Activated B cell treated with CpG ODN at 0.5 μM for 24 hours (primary cell): ENCODE measurements at regions of chr20 and their contacts with region 1.

Region 1: GRCh38 chr20:45293041-45294002 is 13.3 kb upstream of the RBPJL start:
- DNase-seq: peak; percentile 78
- ATAC-seq: peak; percentile 89
- H3K4me3 Mint-ChIP-seq: peak overlapping the region; percentile 80
- H3K27ac Mint-ChIP-seq: no peak overlapping the region
- H3K4me1 Mint-ChIP-seq: peaks cover 21% of the 10 kb centered on the region
- H3K27me3 Mint-ChIP-seq: peaks cover 27% of the 10 kb centered on the region
- CTCF ChIP-seq: peak; percentile 87

Region 2: DNA sequence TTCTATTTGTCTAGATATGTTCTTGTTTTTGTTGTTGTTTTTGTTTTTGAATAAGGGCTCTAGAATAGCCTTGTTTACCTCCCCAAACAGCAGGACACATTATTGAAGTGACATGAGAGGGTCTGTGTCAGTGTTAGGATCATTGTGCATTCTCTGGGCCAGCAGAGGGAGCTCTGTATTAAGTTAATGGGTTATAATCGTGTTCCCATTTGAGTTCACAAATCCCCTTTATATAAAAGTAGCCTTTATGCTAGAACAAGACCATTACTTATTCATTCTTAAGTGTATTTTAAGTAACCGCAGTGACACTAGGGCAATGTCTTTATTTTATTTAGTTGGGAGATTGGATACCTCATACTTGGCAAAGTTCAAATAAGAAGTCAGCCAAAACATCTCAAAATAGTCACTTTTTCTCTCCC is 282.2 kb before region 1 on chr20:
- CTCF ChIA-PET with region 1: interaction called, 7 read pairs
- POLR2A ChIA-PET with region 1: no interaction called
- intact Hi-C with region 1: loop called (anchors 1 kb)
- DNase-seq: no peak
- ATAC-seq: peak; percentile 57
- H3K4me3 Mint-ChIP-seq: no peak overlapping the region
- H3K27ac Mint-ChIP-seq: peak overlapping the region; percentile 33
- H3K4me1 Mint-ChIP-seq: peaks cover 19% of the 10 kb centered on the region
- H3K27me3 Mint-ChIP-seq: no peaks in the 10 kb centered on the region
- CTCF ChIP-seq: no peak

Region 3: DNA sequence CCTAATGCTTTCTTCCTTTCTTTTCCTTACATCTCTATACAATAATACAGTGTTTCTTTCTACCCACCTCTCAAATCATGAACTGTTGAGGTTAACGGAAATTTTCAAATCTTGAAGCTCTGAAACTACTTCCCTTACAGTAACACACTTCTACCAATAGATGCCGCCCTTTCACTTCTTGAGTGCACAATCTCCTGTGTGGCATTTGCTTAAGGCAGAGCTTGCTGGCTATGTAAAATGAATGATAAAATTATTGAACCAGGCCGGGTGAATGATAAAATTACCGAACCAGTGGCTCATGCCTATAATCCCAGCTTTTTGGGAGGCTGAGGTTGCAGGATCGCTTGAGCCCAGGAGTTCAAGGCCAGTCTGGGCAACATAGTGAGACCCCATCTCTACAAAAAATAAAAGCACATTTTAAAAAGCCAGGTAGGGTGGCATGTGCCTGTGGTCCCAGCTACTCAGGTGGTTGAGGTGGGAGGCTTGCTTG is 249.2 kb before region 1 on chr20:
- CTCF ChIA-PET with region 1: interaction called, 34 read pairs
- POLR2A ChIA-PET with region 1: no interaction called
- intact Hi-C with region 1: loop called (anchors 1 kb)
- DNase-seq: no peak
- ATAC-seq: peak; percentile 93
- H3K4me3 Mint-ChIP-seq: no peak overlapping the region
- H3K27ac Mint-ChIP-seq: peak overlapping the region; percentile 1
- H3K4me1 Mint-ChIP-seq: peaks cover 68% of the 10 kb centered on the region
- H3K27me3 Mint-ChIP-seq: no peaks in the 10 kb centered on the region
- CTCF ChIP-seq: peak; percentile 38

Region 4: GRCh38 chr20:45138561-45139300 is 154.6 kb before region 1 on chr20:
- CTCF ChIA-PET with region 1: interaction called, 4 read pairs
- POLR2A ChIA-PET with region 1: no interaction called
- intact Hi-C with region 1: loop called (anchors 5 kb)
- DNase-seq: peak; percentile 34
- ATAC-seq: no peak
- H3K4me3 Mint-ChIP-seq: no peak overlapping the region
- H3K27ac Mint-ChIP-seq: no peak overlapping the region
- H3K4me1 Mint-ChIP-seq: no peaks in the 10 kb centered on the region
- H3K27me3 Mint-ChIP-seq: peaks cover 14% of the 10 kb centered on the region
- CTCF ChIP-seq: no peak

Region 5: DNA sequence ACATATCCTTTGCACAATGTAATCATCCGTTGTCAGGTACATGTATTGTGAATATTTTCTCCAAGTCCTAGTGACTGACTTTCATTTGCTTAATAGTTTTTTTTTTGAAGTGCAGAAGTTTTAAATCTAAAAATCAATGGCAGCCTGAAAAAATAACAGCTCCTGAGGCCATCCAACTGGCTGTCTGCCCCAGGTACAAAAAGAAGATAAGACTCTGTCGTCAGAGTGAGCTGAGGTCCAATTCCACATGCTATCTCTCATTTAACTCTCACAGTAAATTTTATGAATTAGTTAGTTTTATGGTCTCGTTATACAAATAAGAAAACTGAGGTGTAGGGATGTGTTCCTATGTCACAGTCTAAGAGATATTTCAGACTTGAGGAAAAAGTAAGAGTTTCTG is 18.0 kb before region 1 on chr20:
- CTCF ChIA-PET with region 1: no interaction called
- POLR2A ChIA-PET with region 1: no interaction called
- intact Hi-C with region 1: no loop called
- DNase-seq: no peak
- ATAC-seq: no peak
- H3K4me3 Mint-ChIP-seq: no peak overlapping the region
- H3K27ac Mint-ChIP-seq: no peak overlapping the region
- H3K4me1 Mint-ChIP-seq: no peaks in the 10 kb centered on the region
- H3K27me3 Mint-ChIP-seq: peaks cover 42% of the 10 kb centered on the region
- CTCF ChIP-seq: no peak

Region 6: DNA sequence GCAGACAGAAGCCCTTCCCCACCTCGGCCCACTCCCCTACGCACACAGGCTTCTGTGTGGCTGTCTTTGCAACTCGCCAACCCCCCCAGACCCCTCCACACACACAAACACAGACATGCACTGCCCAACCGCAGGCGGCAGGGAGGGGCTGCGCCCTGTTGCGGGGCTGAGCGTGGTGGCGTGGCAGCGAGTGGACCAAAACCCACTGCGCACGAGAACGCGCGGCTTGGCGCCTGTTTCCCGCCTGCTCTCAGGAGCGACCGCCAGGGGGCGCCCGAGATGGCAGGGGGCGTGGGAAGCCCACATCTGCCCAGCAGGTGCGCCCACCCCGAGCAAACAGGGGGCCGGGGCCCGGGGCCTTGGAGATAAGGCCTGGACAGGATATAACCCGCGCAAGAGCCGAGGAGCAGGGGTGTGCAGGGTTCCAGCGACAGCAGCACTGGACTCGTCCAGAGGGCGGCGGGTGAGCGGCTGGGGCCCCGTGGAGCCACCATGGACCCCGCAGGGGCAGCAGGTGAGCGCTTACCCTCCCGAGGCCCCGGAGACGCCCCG is 13.2 kb after region 1 on chr20 and contains the start of gene RBPJL:
- CTCF ChIA-PET with region 1: interaction called, 45 read pairs
- POLR2A ChIA-PET with region 1: no interaction called
- intact Hi-C with region 1: no loop called
- DNase-seq: peak; percentile 44
- ATAC-seq: no peak
- H3K4me3 Mint-ChIP-seq: no peak within 1 kb of the TSS
- H3K27ac Mint-ChIP-seq: no peak within 1 kb of the TSS
- H3K4me1 Mint-ChIP-seq: peaks cover 8% of the 10 kb centered on the region
- H3K27me3 Mint-ChIP-seq: peaks cover 47% of the 10 kb centered on the region
- CTCF ChIP-seq: peak; percentile 32
- total RNA-seq, gene RBPJL: not detected in 2 replicates

Region 7: GRCh38 chr20:45311589-45312211 is 18.4 kb after region 1 on chr20:
- CTCF ChIA-PET with region 1: interaction called, 17 read pairs
- POLR2A ChIA-PET with region 1: no interaction called
- intact Hi-C with region 1: no loop called
- DNase-seq: peak; percentile 58
- ATAC-seq: peak; percentile 89
- H3K4me3 Mint-ChIP-seq: no peak overlapping the region
- H3K27ac Mint-ChIP-seq: no peak overlapping the region
- H3K4me1 Mint-ChIP-seq: peaks cover 7% of the 10 kb centered on the region
- H3K27me3 Mint-ChIP-seq: peaks cover 55% of the 10 kb centered on the region
- CTCF ChIP-seq: peak; percentile 76